Ovary (tissue), 10 donors: ENCODE measurements at regions of chr1 and their contacts with region 1.

Region 1: DNA sequence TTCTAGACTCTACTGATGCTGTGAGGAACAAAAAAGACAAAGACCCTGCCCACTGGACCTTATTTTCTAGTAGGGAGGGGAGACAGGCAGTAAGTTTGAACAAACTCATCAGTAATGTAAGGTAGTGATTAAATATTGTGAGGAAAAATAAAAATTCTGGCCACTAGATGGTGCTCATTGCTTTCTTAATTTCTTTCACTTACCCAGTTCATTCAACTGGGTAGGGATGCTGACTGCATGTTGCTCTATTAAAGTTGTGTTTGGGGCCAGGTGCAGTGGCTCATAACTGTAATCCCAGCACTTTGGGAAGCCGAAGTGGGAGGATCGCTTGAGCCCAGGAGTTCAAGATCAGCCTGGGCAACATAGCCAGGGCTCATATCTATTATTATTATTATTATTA is 6.3 kb upstream of the KYAT3 start:
- DNase-seq: no peak
- H3K4me3 ChIP-seq: no peak overlapping the region
- H3K27ac ChIP-seq: no peak overlapping the region
- H3K4me1 ChIP-seq: no peaks in the 10 kb centered on the region
- H3K27me3 ChIP-seq: no peaks in the 10 kb centered on the region
- CTCF ChIP-seq: peak; percentile 49 to 68 (median 68)
- EP300 ChIP-seq: no peak
- POLR2A ChIP-seq: no peak

Region 2: DNA sequence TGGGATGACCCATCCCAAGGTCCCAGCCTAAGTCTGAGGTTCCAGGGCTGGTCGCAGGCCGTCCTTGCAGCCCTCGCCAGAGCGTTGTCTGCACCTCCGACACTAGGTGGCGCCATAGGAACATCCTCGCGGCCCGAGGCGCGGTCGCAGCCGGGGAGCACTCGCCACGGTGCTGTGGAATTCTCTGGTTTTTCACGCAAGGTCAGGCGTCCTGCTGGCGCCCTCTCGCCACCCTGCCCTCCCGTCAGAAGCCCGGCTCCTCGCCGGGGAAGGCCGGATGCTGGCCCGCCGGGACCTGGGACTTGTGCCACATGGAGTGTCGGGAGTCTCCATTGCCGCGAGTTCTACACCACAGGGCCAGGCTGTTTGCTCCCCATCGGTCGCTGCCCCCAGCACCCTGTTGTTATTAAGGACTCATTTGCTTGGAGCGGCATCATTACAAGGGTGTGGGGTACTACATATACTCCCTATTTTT is 1866.9 kb before region 1 on chr1:
- intact Hi-C with region 1: no loop called
- DNase-seq: peak; percentile 83 to 89 (median 86)
- H3K4me3 ChIP-seq: peak overlapping the region; percentile 50
- H3K27ac ChIP-seq: peak overlapping the region; percentile 63 to 74
- H3K4me1 ChIP-seq: no peaks in the 10 kb centered on the region
- H3K27me3 ChIP-seq: no peaks in the 10 kb centered on the region
- CTCF ChIP-seq: peak; percentile 76 to 78 (median 77)
- EP300 ChIP-seq: no peak
- POLR2A ChIP-seq: no peak

Region 3: GRCh38 chr1:89350298-89350697 is 351.6 kb after region 1 on chr1:
- intact Hi-C with region 1: no loop called
- DNase-seq: no peak
- H3K4me3 ChIP-seq: no peak overlapping the region
- H3K27ac ChIP-seq: no peak overlapping the region
- H3K4me1 ChIP-seq: no peaks in the 10 kb centered on the region
- H3K27me3 ChIP-seq: no peaks in the 10 kb centered on the region
- CTCF ChIP-seq: no peak
- EP300 ChIP-seq: no peak
- POLR2A ChIP-seq: no peak

Region 4: GRCh38 chr1:89363196-89363595 is 364.5 kb after region 1 on chr1:
- intact Hi-C with region 1: loop called in 2 of 4 experiments (anchors 5 to 10 kb)
- DNase-seq: no peak
- H3K4me3 ChIP-seq: no peak overlapping the region
- H3K27ac ChIP-seq: no peak overlapping the region
- H3K4me1 ChIP-seq: peaks cover 2% of the 10 kb centered on the region
- H3K27me3 ChIP-seq: no peaks in the 10 kb centered on the region
- CTCF ChIP-seq: no peak
- EP300 ChIP-seq: no peak
- POLR2A ChIP-seq: no peak

Region 5: GRCh38 chr1:89454845-89455521 is 456.3 kb after region 1 on chr1:
- intact Hi-C with region 1: loop called in 1 of 4 experiments (anchors 5 kb)
- DNase-seq: peak in 4 of 5 donors; percentile 20 to 38 (median 31)
- H3K4me3 ChIP-seq: no peak overlapping the region
- H3K27ac ChIP-seq: no peak overlapping the region
- H3K4me1 ChIP-seq: no peaks in the 10 kb centered on the region
- H3K27me3 ChIP-seq: no peaks in the 10 kb centered on the region
- CTCF ChIP-seq: peak; percentile 20 to 67 (median 46)
- EP300 ChIP-seq: no peak
- POLR2A ChIP-seq: no peak